MCF 10A (cell line): ENCODE measurements at regions of chr13 and their contacts with region 1.

Region 1: GRCh38 chr13:40660141-40660664 is 6.2 kb downstream of the FOXO1 start:
- DNase-seq: peak; percentile 25
- H3K4me3 Mint-ChIP-seq: peak overlapping the region; percentile 90
- H3K27ac Mint-ChIP-seq: peak overlapping the region; percentile 63
- H3K4me1 Mint-ChIP-seq: peaks cover 38% of the 10 kb centered on the region
- H3K27me3 Mint-ChIP-seq: no peaks in the 10 kb centered on the region
- CTCF ChIP-seq: no peak

Region 2: DNA sequence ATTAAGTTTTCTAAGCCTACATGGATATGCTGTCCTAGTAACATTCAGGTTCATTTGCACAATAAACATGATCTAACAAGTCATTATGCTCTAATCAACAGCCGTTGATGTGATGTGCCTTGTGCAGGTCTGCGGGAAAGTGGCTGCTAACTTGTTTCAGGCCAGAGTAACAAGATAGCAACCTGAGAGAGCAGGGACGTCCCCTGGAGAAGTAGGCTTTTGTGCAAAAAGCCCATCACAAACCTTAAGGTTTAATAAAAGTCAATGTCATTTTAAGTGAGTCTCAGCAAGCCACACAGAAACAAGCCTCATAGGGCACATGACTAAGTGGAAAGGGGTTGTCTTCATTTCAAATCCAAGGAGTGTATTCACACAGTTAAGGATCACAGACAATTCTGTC is 11.4 kb before region 1 on chr13:
- CTCF ChIA-PET with region 1: no interaction called
- POLR2A ChIA-PET with region 1: interaction called, 16 read pairs
- intact Hi-C with region 1: no loop called
- DNase-seq: no peak
- H3K4me3 Mint-ChIP-seq: no peak overlapping the region
- H3K27ac Mint-ChIP-seq: no peak overlapping the region
- H3K4me1 Mint-ChIP-seq: peaks cover 61% of the 10 kb centered on the region
- H3K27me3 Mint-ChIP-seq: no peaks in the 10 kb centered on the region
- CTCF ChIP-seq: no peak